GM12878 (cell line): ENCODE measurements at regions of chr21 and their contacts with region 1.

Region 1: GRCh38 chr21:25801217-25802014 is 66.6 kb downstream of the GABPA start:
- DNase-seq: peak; percentile 59
- ATAC-seq: peak; percentile 100
- H3K4me3 ChIP-seq: no peak overlapping the region
- H3K27ac ChIP-seq: no peak overlapping the region
- H3K4me1 ChIP-seq: no peaks in the 10 kb centered on the region
- H3K27me3 ChIP-seq: no peaks in the 10 kb centered on the region
- CTCF ChIP-seq: peak; percentile 98 to 100 (median 99)
- EP300 ChIP-seq: no peak
- POLR2A ChIP-seq: no peak
- RAD21 ChIP-seq: peak; percentile 64

Region 2: GRCh38 chr21:25790122-25790877 is 11.1 kb before region 1 on chr21:
- CTCF ChIA-PET with region 1: interaction called, 10 read pairs
- POLR2A ChIA-PET with region 1: no interaction called
- RAD21 ChIA-PET with region 1: no interaction called
- SMC1A ChIA-PET with region 1: interaction called, 7 read pairs
- in situ Hi-C with region 1: no loop called
- intact Hi-C with region 1: no loop called
- DNase-seq: no peak
- ATAC-seq: peak; percentile 69
- H3K4me3 ChIP-seq: peak overlapping the region; percentile 38; the same call in 1 of the 2 replicates
- H3K27ac ChIP-seq: no peak overlapping the region
- H3K4me1 ChIP-seq: no peaks in the 10 kb centered on the region
- H3K27me3 ChIP-seq: no peaks in the 10 kb centered on the region
- CTCF ChIP-seq: peak; percentile 29 to 35 (median 32); a peak in 3 of 6 replicates
- EP300 ChIP-seq: no peak
- POLR2A ChIP-seq: no peak
- RAD21 ChIP-seq: peak; percentile 51; the same call in 1 of the 2 replicates